ENCODE measurements at regions of chr2 and their contacts with region 1.

Region 1: DNA sequence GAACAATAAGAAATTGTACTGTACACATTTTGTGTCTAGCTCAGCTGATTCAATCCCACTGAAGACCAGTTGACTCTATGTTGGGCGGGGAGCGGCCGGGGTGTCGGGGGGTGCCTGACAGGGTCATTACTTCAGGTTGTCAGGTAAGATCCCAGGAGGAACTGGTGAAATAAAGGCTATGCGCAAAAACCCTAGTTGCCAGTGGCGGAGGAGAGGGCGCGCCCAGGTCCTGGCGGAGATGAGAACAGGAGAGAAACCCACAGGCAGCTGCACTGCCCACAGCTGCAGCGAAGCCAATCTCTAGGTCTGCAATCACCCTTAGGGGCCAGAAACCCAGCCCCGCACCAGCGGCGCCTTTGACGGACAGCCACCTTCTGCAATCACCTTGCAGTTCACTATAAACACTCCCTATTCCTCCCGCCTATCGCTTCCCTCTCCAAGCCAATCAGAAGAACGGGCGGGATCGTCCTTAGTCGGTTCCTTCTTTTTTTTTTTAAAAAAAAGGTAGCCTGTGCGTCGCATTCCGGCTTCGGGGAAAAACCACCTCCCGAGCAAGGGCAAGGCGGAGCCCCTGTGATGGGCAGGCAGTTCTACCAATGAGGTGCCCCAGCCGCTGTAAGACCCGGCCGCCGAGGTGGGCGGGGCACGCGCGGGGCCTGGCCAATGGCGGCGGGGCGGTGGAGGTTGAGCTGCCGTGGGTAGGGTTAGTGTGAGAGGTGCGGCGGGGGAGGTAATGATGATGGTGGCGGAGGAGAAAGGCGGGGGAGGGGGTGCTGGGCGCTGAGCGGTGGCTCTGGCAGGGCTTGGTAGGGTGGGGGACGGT is at the start of gene EHBP1:
- DNase-seq: peak; percentile 99
- ATAC-seq: peak; percentile 99 to 100 (median 99)
- H3K4me3 ChIP-seq: peak within 1 kb of the TSS; percentile 71 to 91 (median 84)
- H3K27ac ChIP-seq: peak within 1 kb of the TSS; percentile 49 to 94 (median 87)
- H3K4me1 ChIP-seq: peaks cover 0 to 43% (median 29%) of the 10 kb centered on the region in 9 donors
- H3K27me3 ChIP-seq: no peaks in the 10 kb centered on the region
- CTCF ChIP-seq: no peak
- total RNA-seq, gene EHBP1: 15.1 to 26.1 (median 20.3) TPM

Region 2: GRCh38 chr2:61288070-61288841 is 1417.0 kb before region 1 on chr2:
- intact Hi-C with region 1: no loop called
- DNase-seq: no peak
- ATAC-seq: no peak
- H3K4me3 ChIP-seq: no peak overlapping the region
- H3K27ac ChIP-seq: no peak overlapping the region
- H3K4me1 ChIP-seq: no peaks in the 10 kb centered on the region
- H3K27me3 ChIP-seq: no peaks in the 10 kb centered on the region
- CTCF ChIP-seq: no peak

Region 3: DNA sequence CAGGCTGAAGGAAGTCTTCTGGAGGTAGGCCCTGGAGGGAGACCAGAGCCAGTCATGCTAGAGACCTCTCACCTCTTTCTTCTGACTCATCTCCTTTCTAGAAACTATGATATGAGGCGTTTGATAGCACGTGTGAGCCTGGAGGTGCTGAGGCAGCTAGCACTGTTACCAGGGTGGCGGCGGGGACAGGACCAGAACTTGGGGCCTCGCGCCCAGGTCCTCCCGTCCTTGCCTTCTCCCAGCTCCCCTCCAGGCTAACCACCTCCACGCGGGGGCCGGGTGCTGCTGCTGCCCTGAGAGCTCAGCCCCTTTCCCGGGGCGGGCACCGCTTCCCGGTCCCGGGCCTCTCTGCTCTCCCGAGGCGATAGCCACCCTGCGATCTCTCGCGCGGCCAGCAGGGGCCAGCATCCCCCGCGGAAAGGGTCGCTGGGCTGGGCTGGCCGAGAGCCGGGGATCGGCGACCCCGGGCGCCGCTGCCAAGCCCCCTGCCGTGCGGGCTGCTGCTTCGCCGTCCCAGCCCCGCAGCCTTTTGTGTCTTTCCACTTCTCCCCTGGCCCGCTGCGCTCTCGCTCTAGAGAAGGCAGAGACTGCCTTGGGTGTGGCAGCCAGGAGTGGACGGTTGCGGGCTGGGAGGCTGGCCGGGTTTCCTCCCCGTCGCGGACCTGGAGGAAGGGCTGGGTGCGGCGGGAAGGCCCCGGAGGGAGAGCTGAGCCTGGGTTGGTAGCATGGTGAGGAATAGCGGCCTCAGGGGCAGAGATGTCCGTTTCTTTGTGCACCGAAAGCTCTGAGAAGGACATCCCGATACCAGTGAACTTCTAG is 248.3 kb before region 1 on chr2:
- intact Hi-C with region 1: loop called in 5 of 10 experiments (anchors 1 to 5 kb)
- DNase-seq: peak; percentile 62 to 79
- ATAC-seq: peak; percentile 86 to 94 (median 88)
- H3K4me3 ChIP-seq: peak overlapping the region; percentile 43 to 86 (median 72)
- H3K27ac ChIP-seq: peak overlapping the region; percentile 14 to 88 (median 78)
- H3K4me1 ChIP-seq: peaks cover 2 to 19% (median 11%) of the 10 kb centered on the region in 9 donors
- H3K27me3 ChIP-seq: no peaks in the 10 kb centered on the region
- CTCF ChIP-seq: peak; percentile 87 to 99 (median 99)

Region 4: GRCh38 chr2:62475172-62476011 is 229.8 kb before region 1 on chr2:
- intact Hi-C with region 1: loop called in 1 of 10 experiments (anchors 5 kb)
- DNase-seq: no peak
- ATAC-seq: peak; percentile 9 to 56 (median 30)
- H3K4me3 ChIP-seq: peak overlapping the region in 9 of 10 donors; percentile 2 to 43 (median 36)
- H3K27ac ChIP-seq: peak overlapping the region; percentile 2 to 83 (median 74)
- H3K4me1 ChIP-seq: peaks cover 20 to 83% (median 60%) of the 10 kb centered on the region in 9 donors
- H3K27me3 ChIP-seq: no peaks in the 10 kb centered on the region
- CTCF ChIP-seq: peak in 3 of 9 donors; percentile 23 to 34 (median 26)

Region 5: GRCh38 chr2:62505750-62506420 is 199.3 kb before region 1 on chr2 and contains the start of gene TMEM17:
- intact Hi-C with region 1: loop called in 5 of 10 experiments (anchors 2 to 10 kb)
- DNase-seq: peak; percentile 93 to 96
- ATAC-seq: peak; percentile 97 to 100 (median 98)
- H3K4me3 ChIP-seq: peak within 1 kb of the TSS; percentile 56 to 84 (median 74)
- H3K27ac ChIP-seq: peak within 1 kb of the TSS; percentile 81 to 97 (median 88)
- H3K4me1 ChIP-seq: peaks cover 0 to 15% (median 12%) of the 10 kb centered on the region in 9 donors
- H3K27me3 ChIP-seq: no peaks in the 10 kb centered on the region
- CTCF ChIP-seq: no peak
- total RNA-seq, gene TMEM17: 1.2 to 3.2 (median 2.2) TPM

Region 6: GRCh38 chr2:62774555-62775366 is 69.5 kb after region 1 on chr2:
- intact Hi-C with region 1: loop called in 4 of 10 experiments (anchors 5 to 10 kb)
- DNase-seq: no peak
- ATAC-seq: peak in 6 of 8 donors; percentile 43 to 75 (median 57)
- H3K4me3 ChIP-seq: no peak overlapping the region
- H3K27ac ChIP-seq: no peak overlapping the region
- H3K4me1 ChIP-seq: peaks cover 0 to 4% (median 0%) of the 10 kb centered on the region in 9 donors
- H3K27me3 ChIP-seq: no peaks in the 10 kb centered on the region
- CTCF ChIP-seq: peak; percentile 66 to 95 (median 83)

Region 7: GRCh38 chr2:63073994-63074393 is 368.8 kb after region 1 on chr2:
- intact Hi-C with region 1: no loop called
- DNase-seq: no peak
- ATAC-seq: no peak
- H3K4me3 ChIP-seq: no peak overlapping the region
- H3K27ac ChIP-seq: no peak overlapping the region
- H3K4me1 ChIP-seq: no peaks in the 10 kb centered on the region
- H3K27me3 ChIP-seq: peaks cover 0 to 63% (median 39%) of the 10 kb centered on the region in 7 donors
- CTCF ChIP-seq: no peak

Measured in heart right ventricle (tissue), 16 donors.